ENCODE measurements at regions of chr7 and their contacts with region 1.

Region 1: DNA sequence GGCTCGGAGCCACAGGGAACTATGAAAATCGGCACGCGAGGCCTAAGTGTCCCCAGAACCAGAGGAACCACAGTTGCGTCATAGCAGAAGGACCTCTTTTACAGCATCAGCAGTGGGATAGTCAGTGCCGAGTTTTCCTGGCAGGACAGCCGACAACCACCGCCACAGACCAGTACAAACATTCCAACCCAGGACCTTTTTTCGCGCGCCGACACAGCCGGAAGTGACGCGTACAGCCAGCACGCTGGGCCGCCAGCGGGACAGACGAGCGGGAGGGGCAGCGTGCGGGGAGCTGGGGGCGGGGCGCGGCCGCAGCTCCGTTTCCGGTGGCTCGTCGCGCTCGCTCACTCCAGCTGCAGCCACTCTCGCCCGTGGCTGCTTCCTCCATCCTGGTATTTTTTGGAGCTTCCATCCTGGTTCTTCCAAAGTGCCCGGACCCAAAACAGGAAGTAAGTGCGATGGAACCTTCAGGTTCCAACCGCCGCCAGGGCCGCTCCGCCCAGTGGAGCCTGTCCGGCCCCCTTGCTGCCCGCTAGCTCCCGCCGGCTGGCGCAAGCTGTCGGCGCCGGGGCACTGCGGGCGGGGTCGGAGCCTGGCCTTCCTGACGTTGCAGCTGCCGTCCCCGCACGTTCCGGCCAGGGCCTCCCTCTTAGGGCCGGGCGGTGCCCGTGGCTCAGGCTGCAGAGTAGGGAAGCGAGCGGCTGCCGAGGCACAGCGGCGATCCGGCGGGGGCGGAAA is at the start of gene DMTF1:
- DNase-seq: peak; percentile 93 to 99 (median 96)
- ATAC-seq: peak; percentile 94
- H3K4me3 ChIP-seq: peak within 1 kb of the TSS; percentile 57 to 60
- H3K27ac ChIP-seq: peak within 1 kb of the TSS; percentile 98 to 99
- H3K4me1 ChIP-seq: peaks cover 29 to 45% of the 10 kb centered on the region in 2 donors
- H3K27me3 ChIP-seq: no peaks in the 10 kb centered on the region
- CTCF ChIP-seq: peak in 1 of 2 donors; percentile 22
- polyA plus RNA-seq, gene DMTF1: 220 to 321 (median 264) TPM

Region 2: GRCh38 chr7:86926732-86927131 is 225.5 kb before region 1 on chr7:
- intact Hi-C with region 1: loop called in 1 of 2 experiments (anchors 5 kb)
- DNase-seq: peak in 1 of 4 donors; percentile 39
- ATAC-seq: peak; percentile 75
- H3K4me3 ChIP-seq: no peak overlapping the region
- H3K27ac ChIP-seq: no peak overlapping the region
- H3K4me1 ChIP-seq: peaks cover 2% of the 10 kb centered on the region in 2 donors
- H3K27me3 ChIP-seq: no peaks in the 10 kb centered on the region
- CTCF ChIP-seq: peak; percentile 59 to 65

Region 3: GRCh38 chr7:86942081-86942480 is 210.2 kb before region 1 on chr7:
- intact Hi-C with region 1: loop called in 1 of 2 experiments (anchors 5 kb)
- DNase-seq: no peak
- ATAC-seq: no peak
- H3K4me3 ChIP-seq: no peak overlapping the region
- H3K27ac ChIP-seq: no peak overlapping the region
- H3K4me1 ChIP-seq: peaks cover 3% of the 10 kb centered on the region in 2 donors
- H3K27me3 ChIP-seq: no peaks in the 10 kb centered on the region
- CTCF ChIP-seq: no peak

Region 4: GRCh38 chr7:87013836-87014182 is 138.5 kb before region 1 on chr7:
- intact Hi-C with region 1: no loop called
- DNase-seq: no peak
- ATAC-seq: no peak
- H3K4me3 ChIP-seq: no peak overlapping the region
- H3K27ac ChIP-seq: no peak overlapping the region
- H3K4me1 ChIP-seq: no peaks in the 10 kb centered on the region
- H3K27me3 ChIP-seq: no peaks in the 10 kb centered on the region
- CTCF ChIP-seq: no peak

Measured in left lung (tissue), 14 donors.